CD14-positive monocyte (primary cell): ENCODE measurements at regions of chr6 and their contacts with region 1.

Region 1: DNA sequence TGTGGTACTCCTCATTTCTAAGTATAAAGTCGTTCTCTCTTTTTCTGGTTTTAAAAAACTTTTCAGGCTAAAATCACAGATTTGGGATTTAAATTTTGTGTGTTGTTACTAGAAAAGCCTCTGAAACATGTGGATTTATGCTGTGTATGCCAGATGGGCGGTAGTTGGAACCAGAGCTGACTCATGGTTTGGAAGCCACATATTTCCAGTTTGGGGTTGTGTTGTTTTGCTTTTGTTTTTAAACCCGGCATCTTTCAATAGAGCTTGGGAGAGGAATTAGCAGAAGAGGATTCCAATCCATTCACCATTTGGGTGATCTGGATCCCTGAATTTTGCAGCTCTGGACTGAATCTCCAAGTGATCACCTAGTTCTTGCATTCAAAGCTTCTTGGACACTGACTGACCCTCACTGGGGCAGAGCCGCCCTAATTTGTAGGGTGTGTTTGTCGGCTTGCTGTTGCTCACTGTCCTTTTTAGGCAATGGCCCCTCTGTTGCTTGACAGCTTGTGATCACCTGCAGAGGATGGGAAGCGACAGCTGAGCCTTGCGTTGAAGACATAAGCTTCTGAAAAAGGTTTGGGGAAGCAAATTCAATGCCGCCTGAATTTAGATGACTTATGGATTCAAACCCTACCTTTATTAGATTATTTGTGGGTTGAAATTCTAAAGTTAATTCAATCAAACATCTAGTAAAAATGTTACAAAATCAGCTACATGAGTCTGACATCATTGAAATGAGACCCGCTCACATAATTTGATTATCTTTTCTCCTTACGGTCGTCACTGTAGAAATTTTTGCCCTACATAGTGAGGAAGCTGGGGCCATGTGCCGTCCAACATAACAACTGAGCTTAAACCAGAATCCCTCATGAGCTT is 79.9 kb upstream of the CD83 start:
- DNase-seq: peak in 2 of 3 donors; percentile 9 to 16
- H3K4me3 ChIP-seq: peak overlapping the region in 1 of 3 experiments; percentile 22
- H3K4me3 Mint-ChIP-seq: no peak overlapping the region
- H3K27ac ChIP-seq: no peak overlapping the region
- H3K27ac Mint-ChIP-seq: no peak overlapping the region
- H3K4me1 ChIP-seq: peaks cover 9 to 12% of the 10 kb centered on the region in 2 donors
- H3K4me1 Mint-ChIP-seq: peaks cover 14% of the 10 kb centered on the region
- H3K27me3 ChIP-seq: no peaks in the 10 kb centered on the region
- H3K27me3 Mint-ChIP-seq: peaks cover 8 to 10% (median 8%) of the 10 kb centered on the region in 3 donors
- CTCF ChIP-seq: no peak

Region 2: DNA sequence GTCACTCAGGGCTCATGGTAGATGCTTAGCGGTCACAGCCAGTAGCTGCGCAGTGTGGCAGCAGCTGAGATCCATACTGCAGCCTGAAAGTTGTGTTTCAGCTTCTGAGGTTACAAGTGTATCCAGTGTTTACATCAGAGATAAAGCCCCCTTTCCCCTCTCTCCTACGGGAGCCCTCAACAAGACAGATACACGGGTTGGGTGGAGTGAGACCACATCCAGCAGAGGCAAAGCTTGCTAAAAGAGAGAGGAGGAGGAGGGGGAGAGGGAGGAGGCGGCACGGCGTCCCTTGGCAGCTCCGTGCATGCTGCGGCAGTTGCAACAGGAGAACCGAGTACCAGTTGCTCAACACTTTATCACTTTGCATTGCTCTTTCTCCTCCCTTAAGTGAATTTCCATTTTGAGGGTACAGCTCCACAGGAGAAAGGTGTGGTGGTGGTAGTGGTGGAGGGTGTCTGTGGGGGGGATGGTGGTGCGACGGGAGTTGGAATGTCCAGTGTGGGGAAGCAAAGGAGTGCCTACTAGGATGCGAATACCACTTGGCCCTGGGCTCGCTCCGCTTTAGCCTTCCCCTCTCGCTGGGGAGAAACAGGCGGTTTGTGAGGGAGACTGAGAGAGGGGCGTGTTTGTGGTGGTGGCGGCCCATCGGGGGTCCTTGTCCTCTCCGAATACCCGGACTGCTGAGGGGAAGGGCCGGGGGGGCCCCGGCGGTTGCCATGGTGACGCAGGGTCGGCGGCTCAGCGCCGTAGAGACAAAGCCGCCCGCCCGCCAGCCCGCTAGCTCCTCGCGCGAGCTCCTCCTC is 113.3 kb before region 1 on chr6:
- intact Hi-C with region 1: loop called (anchors 10 kb)
- DNase-seq: peak in 2 of 3 donors; percentile 7 to 12
- H3K4me3 ChIP-seq: peak overlapping the region; percentile 2 to 68 (median 18)
- H3K4me3 Mint-ChIP-seq: peak overlapping the region; percentile 75 to 92
- H3K27ac ChIP-seq: no peak overlapping the region
- H3K27ac Mint-ChIP-seq: peak overlapping the region in 2 of 7 donors; percentile 9 to 21
- H3K4me1 ChIP-seq: peaks cover 15 to 17% of the 10 kb centered on the region in 2 donors
- H3K4me1 Mint-ChIP-seq: peaks cover 16% of the 10 kb centered on the region
- H3K27me3 ChIP-seq: peaks cover 76 to 90% of the 10 kb centered on the region in 2 donors
- H3K27me3 Mint-ChIP-seq: peaks cover 59 to 77% (median 61%) of the 10 kb centered on the region in 3 donors
- CTCF ChIP-seq: no peak